ENCODE measurements at regions of chr4 and their contacts with region 1.

Region 1: GRCh38 chr4:87592124-87592523 is 16.2 kb upstream of the DSPP start:
- DNase-seq: no peak
- H3K4me3 ChIP-seq: no peak overlapping the region
- H3K27ac ChIP-seq: no peak overlapping the region
- H3K4me1 ChIP-seq: no peaks in the 10 kb centered on the region
- H3K27me3 ChIP-seq: no peaks in the 10 kb centered on the region
- CTCF ChIP-seq: no peak
- POLR2A ChIP-seq: no peak

Region 2: GRCh38 chr4:87644286-87644685 is 52.2 kb after region 1 on chr4:
- intact Hi-C with region 1: loop called (anchors 2 kb)
- DNase-seq: no peak
- H3K4me3 ChIP-seq: no peak overlapping the region
- H3K27ac ChIP-seq: no peak overlapping the region
- H3K4me1 ChIP-seq: no peaks in the 10 kb centered on the region
- H3K27me3 ChIP-seq: no peaks in the 10 kb centered on the region
- CTCF ChIP-seq: no peak
- POLR2A ChIP-seq: no peak

Region 3: DNA sequence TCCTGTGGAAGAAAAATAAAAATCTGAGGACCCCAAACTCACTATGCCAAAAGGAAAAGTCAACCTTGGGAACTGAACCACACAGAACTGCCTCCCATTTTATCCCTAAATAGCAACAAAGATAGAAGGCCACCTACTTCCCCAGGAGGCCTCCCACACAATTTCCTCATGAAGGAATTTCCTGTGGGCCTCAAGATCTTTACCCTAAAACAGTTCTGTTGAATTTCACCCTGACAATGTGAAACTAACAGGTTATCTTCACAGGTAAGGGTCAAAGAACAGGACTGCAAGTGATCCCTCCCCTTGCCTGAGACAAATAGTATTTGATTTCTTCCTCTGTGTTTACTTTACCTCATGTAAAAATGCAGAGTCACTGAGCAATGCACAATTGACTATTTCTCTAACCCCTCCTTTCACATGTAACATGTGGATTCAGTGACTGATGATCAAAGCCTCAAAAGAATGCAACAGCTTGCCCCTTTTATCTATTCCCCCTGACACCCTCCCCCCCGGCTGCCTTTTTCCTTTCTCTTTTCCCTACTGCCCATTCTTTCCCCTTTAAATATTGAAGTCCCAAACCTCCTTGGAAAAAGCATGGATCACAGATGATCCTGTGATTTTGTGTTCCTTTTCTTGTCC is 274.0 kb after region 1 on chr4:
- intact Hi-C with region 1: no loop called
- DNase-seq: no peak
- H3K4me3 ChIP-seq: no peak overlapping the region
- H3K27ac ChIP-seq: peak overlapping the region in 5 of 8 donors; percentile 13 to 65 (median 39)
- H3K4me1 ChIP-seq: peaks cover 0 to 13% (median 0%) of the 10 kb centered on the region in 6 donors
- H3K27me3 ChIP-seq: no peaks in the 10 kb centered on the region
- CTCF ChIP-seq: no peak
- POLR2A ChIP-seq: no peak